ENCODE measurements at regions of chr18 and their contacts with region 1.

Region 1: DNA sequence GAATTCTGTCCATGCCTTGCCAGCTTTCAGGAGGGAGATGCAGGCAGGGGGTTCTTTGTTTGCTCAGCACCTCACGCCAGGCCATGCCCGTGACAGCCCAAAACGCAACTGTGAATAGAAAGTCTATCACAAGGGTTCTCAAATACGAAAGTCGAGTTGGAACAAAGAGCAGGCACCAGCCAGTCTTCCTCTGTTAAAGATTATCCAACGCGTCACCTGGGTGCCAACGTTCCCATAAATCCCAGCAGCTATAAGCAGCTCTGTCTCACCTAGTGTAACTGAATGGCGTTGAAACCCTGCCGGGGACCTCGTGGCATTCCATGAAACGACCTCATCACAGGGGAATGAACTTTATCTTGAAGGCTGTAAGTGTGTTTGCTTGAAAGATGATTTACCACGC is 84.8 kb upstream of the GATA6 start:
- DNase-seq: peak; percentile 78 to 91
- H3K4me3 ChIP-seq: peak overlapping the region; percentile 3; the same call in 1 of the 2 replicates
- H3K4me3 Mint-ChIP-seq: peak overlapping the region; percentile 69
- H3K27ac Mint-ChIP-seq: peak overlapping the region; percentile 87
- H3K4me1 ChIP-seq: peaks cover 75% of the 10 kb centered on the region
- H3K4me1 Mint-ChIP-seq: peaks cover 61% of the 10 kb centered on the region
- H3K27me3 ChIP-seq: no peaks in the 10 kb centered on the region
- H3K27me3 Mint-ChIP-seq: no peaks in the 10 kb centered on the region
- CTCF ChIP-seq: no peak

Region 2: GRCh38 chr18:21704603-21705364 is 379.8 kb before region 1 on chr18 and contains the start of gene ABHD3:
- CTCF ChIA-PET with region 1: no interaction called
- POLR2A ChIA-PET with region 1: no interaction called
- intact Hi-C with region 1: no loop called
- DNase-seq: peak; percentile 94 to 96
- H3K4me3 ChIP-seq: peak within 1 kb of the TSS; percentile 84
- H3K4me3 Mint-ChIP-seq: peak within 1 kb of the TSS; percentile 86
- H3K27ac Mint-ChIP-seq: peak within 1 kb of the TSS; percentile 64
- H3K4me1 ChIP-seq: peaks cover 6% of the 10 kb centered on the region
- H3K4me1 Mint-ChIP-seq: peaks cover 6% of the 10 kb centered on the region
- H3K27me3 ChIP-seq: no peaks in the 10 kb centered on the region
- H3K27me3 Mint-ChIP-seq: no peaks in the 10 kb centered on the region
- CTCF ChIP-seq: peak; percentile 25 to 39
- total RNA-seq, gene ABHD3: 29.3 and 31.8 TPM in 2 replicates

Region 3: GRCh38 chr18:21760321-21760720 is 324.2 kb before region 1 on chr18:
- CTCF ChIA-PET with region 1: no interaction called
- POLR2A ChIA-PET with region 1: no interaction called
- intact Hi-C with region 1: no loop called
- DNase-seq: no peak
- H3K4me3 ChIP-seq: no peak overlapping the region
- H3K4me3 Mint-ChIP-seq: no peak overlapping the region
- H3K27ac Mint-ChIP-seq: no peak overlapping the region
- H3K4me1 ChIP-seq: peaks cover 8% of the 10 kb centered on the region; the same call in 1 of the 2 replicates
- H3K4me1 Mint-ChIP-seq: peaks cover 1% of the 10 kb centered on the region
- H3K27me3 ChIP-seq: no peaks in the 10 kb centered on the region
- H3K27me3 Mint-ChIP-seq: no peaks in the 10 kb centered on the region
- CTCF ChIP-seq: no peak

Region 4: GRCh38 chr18:22044474-22045220 is 39.9 kb before region 1 on chr18:
- CTCF ChIA-PET with region 1: interaction called, 4 read pairs
- POLR2A ChIA-PET with region 1: interaction called, 9 read pairs
- intact Hi-C with region 1: loop called (anchors 1 kb)
- DNase-seq: peak; percentile 88 to 94
- H3K4me3 ChIP-seq: peak overlapping the region; percentile 22
- H3K4me3 Mint-ChIP-seq: peak overlapping the region; percentile 71
- H3K27ac Mint-ChIP-seq: peak overlapping the region; percentile 89
- H3K4me1 ChIP-seq: peaks cover 88% of the 10 kb centered on the region
- H3K4me1 Mint-ChIP-seq: peaks cover 79% of the 10 kb centered on the region
- H3K27me3 ChIP-seq: no peaks in the 10 kb centered on the region
- H3K27me3 Mint-ChIP-seq: no peaks in the 10 kb centered on the region
- CTCF ChIP-seq: no peak

Region 5: GRCh38 chr18:22108674-22109073 is 24.1 kb after region 1 on chr18:
- CTCF ChIA-PET with region 1: no interaction called
- POLR2A ChIA-PET with region 1: no interaction called
- intact Hi-C with region 1: loop called (anchors 2 kb)
- DNase-seq: peak; percentile 51 to 62
- H3K4me3 ChIP-seq: no peak overlapping the region
- H3K4me3 Mint-ChIP-seq: no peak overlapping the region
- H3K27ac Mint-ChIP-seq: peak overlapping the region; percentile 74
- H3K4me1 ChIP-seq: peaks cover 53% of the 10 kb centered on the region
- H3K4me1 Mint-ChIP-seq: peaks cover 44% of the 10 kb centered on the region
- H3K27me3 ChIP-seq: no peaks in the 10 kb centered on the region
- H3K27me3 Mint-ChIP-seq: no peaks in the 10 kb centered on the region
- CTCF ChIP-seq: peak; percentile 40 to 44